ENCODE measurements at regions of chr21 and their contacts with region 1.

Region 1: DNA sequence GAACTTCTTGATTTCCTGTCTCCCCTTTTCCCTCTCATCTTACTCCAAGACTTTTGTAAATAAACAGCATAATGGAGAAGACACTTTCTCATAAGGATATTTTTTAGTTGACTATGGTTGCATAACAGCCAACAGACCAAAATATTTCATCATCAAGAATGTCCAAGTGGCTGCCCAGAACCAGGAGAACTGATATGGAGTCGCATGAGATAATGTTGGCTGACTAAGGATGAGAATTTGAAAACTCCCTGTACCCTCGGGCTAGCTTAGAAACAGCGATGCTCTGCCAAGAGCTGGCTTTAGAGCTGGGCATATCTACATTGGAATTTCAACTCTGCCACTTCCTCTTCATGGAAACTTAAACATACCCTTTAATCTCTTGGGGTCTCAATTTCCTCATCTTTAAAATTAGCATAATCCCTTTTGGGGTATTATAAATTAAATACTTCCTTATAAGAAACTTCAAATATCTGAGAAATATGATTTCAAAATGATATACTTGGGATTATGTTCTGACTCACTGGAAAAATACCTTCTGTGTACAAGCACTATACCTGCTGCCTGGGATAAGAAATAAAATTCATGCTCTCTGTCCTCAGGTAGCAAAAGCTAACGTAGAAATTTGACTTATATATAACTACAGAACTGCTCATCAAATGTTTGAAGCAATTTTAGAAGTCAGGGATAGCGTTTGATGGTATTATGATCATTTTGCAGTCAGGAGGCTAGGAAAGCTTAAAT is 777.3 kb downstream of the LTN1 start:
- DNase-seq: peak; percentile 35 to 59
- ATAC-seq: peak; percentile 98 to 99
- H3K4me3 ChIP-seq: peak overlapping the region in 1 of 4 donors; percentile 15
- H3K27ac ChIP-seq: peak overlapping the region; percentile 55 to 75 (median 62)
- H3K4me1 ChIP-seq: peaks cover 10 to 30% of the 10 kb centered on the region in 2 donors
- H3K27me3 ChIP-seq: no peaks in the 10 kb centered on the region
- CTCF ChIP-seq: no peak
- POLR2A ChIP-seq: no peak

Region 2: DNA sequence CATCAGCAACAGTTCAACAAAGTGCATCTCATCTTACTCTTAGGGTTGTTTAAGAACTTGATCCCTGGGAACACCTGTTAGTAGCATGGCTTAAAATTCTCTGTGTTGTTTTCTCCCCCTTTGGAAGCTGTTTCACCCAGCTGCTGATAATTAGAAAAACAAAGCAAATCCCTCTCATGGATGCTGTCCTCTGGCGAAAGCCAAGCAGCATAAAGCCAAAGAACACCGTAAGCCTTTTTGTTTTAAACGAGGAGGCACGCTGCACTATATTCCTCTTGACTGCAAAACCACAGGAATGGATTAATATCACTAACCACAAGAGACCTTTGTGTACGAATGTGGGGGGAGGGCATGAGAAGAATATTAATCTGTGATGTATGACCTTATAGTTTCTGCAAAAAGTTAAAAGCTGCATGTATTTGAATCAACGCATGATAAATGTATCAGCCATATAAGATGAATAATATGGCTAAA is 145.9 kb before region 1 on chr21:
- in situ Hi-C with region 1: no loop called
- intact Hi-C with region 1: loop called (anchors 1 kb)
- DNase-seq: peak in 1 of 2 donors; percentile 25
- ATAC-seq: peak; percentile 63 to 70
- H3K4me3 ChIP-seq: peak overlapping the region; percentile 9 to 38 (median 20)
- H3K27ac ChIP-seq: peak overlapping the region; percentile 87 to 91 (median 88)
- H3K4me1 ChIP-seq: peaks cover 17 to 43% of the 10 kb centered on the region in 2 donors
- H3K27me3 ChIP-seq: no peaks in the 10 kb centered on the region
- CTCF ChIP-seq: no peak
- POLR2A ChIP-seq: no peak

Region 3: GRCh38 chr21:28104346-28104745 is 111.0 kb before region 1 on chr21:
- in situ Hi-C with region 1: no loop called
- intact Hi-C with region 1: loop called (anchors 10 kb)
- DNase-seq: no peak
- ATAC-seq: no peak
- H3K4me3 ChIP-seq: no peak overlapping the region
- H3K27ac ChIP-seq: peak overlapping the region in 2 of 4 donors; percentile 8 to 23
- H3K4me1 ChIP-seq: peaks cover 21 to 23% of the 10 kb centered on the region in 2 donors
- H3K27me3 ChIP-seq: no peaks in the 10 kb centered on the region
- CTCF ChIP-seq: no peak
- POLR2A ChIP-seq: no peak

Region 4: DNA sequence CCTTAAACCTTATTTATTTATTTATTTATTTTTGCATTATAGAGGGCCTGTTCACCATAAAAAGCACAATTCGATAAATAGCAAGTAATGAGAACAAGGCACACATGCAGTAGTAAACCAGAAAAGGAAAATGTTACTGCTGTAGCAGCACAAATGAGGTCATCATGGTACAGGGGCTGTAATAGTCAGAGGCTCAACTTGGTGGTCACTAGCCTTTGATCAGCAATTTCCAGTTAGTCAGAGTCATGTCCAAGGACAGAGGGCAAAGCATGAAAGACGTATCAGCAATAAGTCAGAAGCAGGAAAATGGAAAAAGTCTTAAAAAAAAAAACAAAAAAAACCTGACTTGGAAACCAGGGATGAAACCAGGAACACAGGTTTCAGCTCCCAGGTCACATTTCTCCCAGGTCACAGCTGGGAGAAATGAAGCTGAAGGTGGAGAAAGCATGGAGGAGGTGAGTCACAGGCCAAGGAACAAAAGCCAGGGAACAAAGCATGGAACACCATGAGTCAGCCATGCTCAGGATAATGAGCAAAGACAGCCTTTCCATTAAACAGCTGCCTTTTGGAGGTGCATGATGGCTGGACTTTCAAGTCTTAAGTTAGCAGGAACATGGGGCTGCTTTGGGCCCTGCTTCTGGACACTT is 221.0 kb after region 1 on chr21:
- in situ Hi-C with region 1: no loop called
- intact Hi-C with region 1: no loop called
- DNase-seq: no peak
- ATAC-seq: no peak
- H3K4me3 ChIP-seq: no peak overlapping the region
- H3K27ac ChIP-seq: no peak overlapping the region
- H3K4me1 ChIP-seq: no peaks in the 10 kb centered on the region
- H3K27me3 ChIP-seq: no peaks in the 10 kb centered on the region
- CTCF ChIP-seq: no peak
- POLR2A ChIP-seq: no peak